Naive thymus-derived CD4-positive, alpha-beta T cell (primary cell): ENCODE measurements at regions of chr1 and their contacts with region 1.

Region 1: GRCh38 chr1:59309795-59310548 is 13.1 kb downstream of the FGGY start:
- DNase-seq: no peak
- ATAC-seq: no peak
- H3K4me3 ChIP-seq: no peak overlapping the region
- H3K4me3 Mint-ChIP-seq: no peak overlapping the region
- H3K27ac ChIP-seq: no peak overlapping the region
- H3K27ac Mint-ChIP-seq: no peak overlapping the region
- H3K4me1 ChIP-seq: no peaks in the 10 kb centered on the region
- H3K4me1 Mint-ChIP-seq: peaks cover 0 to 28% (median 0%) of the 10 kb centered on the region in 7 donors
- H3K27me3 ChIP-seq: no peaks in the 10 kb centered on the region
- H3K27me3 Mint-ChIP-seq: no peaks in the 10 kb centered on the region

Region 2: DNA sequence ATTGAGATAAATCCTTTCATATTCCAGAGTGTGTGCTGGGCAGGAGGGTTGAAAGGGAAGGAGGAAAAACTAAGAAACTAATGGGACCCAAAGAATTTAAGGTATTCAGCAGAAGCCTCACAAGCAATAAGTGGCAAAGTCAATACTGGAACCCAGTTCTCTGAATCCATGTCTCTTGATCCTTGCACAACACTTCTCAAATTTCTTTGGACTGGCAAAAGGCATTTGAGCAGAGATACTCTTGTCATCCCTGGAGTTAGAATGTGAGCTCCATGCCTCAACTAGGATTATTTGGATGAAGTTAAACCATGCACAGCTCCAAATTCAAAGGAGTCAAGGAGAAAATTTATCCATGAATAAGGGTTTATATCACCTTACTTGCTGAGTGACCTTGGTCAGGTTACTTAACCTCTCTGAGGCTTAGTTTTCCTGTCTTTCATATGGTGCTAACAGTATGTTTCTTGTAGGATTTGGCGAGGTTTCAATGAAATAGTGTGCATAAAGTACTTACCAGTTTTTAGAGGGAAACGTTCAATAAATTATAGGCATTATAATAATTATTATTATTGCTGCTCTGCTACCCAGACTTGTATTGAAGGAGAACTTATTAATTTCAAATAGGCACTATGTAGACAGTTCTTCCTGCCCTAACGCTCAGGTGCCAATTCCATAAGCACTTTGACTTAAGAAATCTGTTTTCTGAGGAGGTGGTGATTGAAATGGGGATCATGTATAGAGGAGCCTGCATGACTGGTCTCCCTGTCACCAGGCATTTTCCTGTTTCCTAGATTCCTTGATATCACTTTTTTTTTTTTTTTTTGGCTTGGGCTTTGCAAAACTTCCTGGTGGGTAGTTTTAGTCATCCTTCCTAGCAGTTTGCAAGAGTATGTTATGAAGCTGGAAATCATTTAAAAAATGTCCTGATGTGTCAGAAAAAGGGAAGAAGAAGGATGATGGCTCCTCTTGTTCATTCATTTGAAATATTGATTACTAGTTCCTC is 401.1 kb before region 1 on chr1:
- CTCF ChIA-PET with region 1: no interaction called
- POLR2A ChIA-PET with region 1: no interaction called
- intact Hi-C with region 1: loop called in 1 of 2 experiments (anchors 5 kb)
- DNase-seq: no peak
- ATAC-seq: no peak
- H3K4me3 ChIP-seq: no peak overlapping the region
- H3K4me3 Mint-ChIP-seq: no peak overlapping the region
- H3K27ac ChIP-seq: no peak overlapping the region
- H3K27ac Mint-ChIP-seq: no peak overlapping the region
- H3K4me1 ChIP-seq: peaks cover 0 to 4% of the 10 kb centered on the region in 2 donors
- H3K4me1 Mint-ChIP-seq: peaks cover 2 to 19% (median 10%) of the 10 kb centered on the region in 7 donors
- H3K27me3 ChIP-seq: no peaks in the 10 kb centered on the region
- H3K27me3 Mint-ChIP-seq: peaks cover 0 to 9% (median 1%) of the 10 kb centered on the region in 5 donors

Region 3: GRCh38 chr1:59329412-59330053 is 19.6 kb after region 1 on chr1:
- CTCF ChIA-PET with region 1: no interaction called
- POLR2A ChIA-PET with region 1: no interaction called
- intact Hi-C with region 1: no loop called
- DNase-seq: no peak
- ATAC-seq: no peak
- H3K4me3 ChIP-seq: no peak overlapping the region
- H3K4me3 Mint-ChIP-seq: no peak overlapping the region
- H3K27ac ChIP-seq: no peak overlapping the region
- H3K27ac Mint-ChIP-seq: no peak overlapping the region
- H3K4me1 ChIP-seq: peaks cover 3 to 10% of the 10 kb centered on the region in 2 donors
- H3K4me1 Mint-ChIP-seq: peaks cover 5 to 38% (median 20%) of the 10 kb centered on the region in 7 donors
- H3K27me3 ChIP-seq: no peaks in the 10 kb centered on the region
- H3K27me3 Mint-ChIP-seq: no peaks in the 10 kb centered on the region

Region 4: GRCh38 chr1:59340411-59341307 is 30.7 kb after region 1 on chr1:
- CTCF ChIA-PET with region 1: no interaction called
- POLR2A ChIA-PET with region 1: no interaction called
- intact Hi-C with region 1: no loop called
- DNase-seq: no peak
- ATAC-seq: no peak
- H3K4me3 ChIP-seq: no peak overlapping the region
- H3K4me3 Mint-ChIP-seq: no peak overlapping the region
- H3K27ac ChIP-seq: no peak overlapping the region
- H3K27ac Mint-ChIP-seq: peak overlapping the region in 1 of 9 donors; percentile 59
- H3K4me1 ChIP-seq: no peaks in the 10 kb centered on the region
- H3K4me1 Mint-ChIP-seq: peaks cover 0 to 7% (median 0%) of the 10 kb centered on the region in 7 donors
- H3K27me3 ChIP-seq: no peaks in the 10 kb centered on the region
- H3K27me3 Mint-ChIP-seq: no peaks in the 10 kb centered on the region